ENCODE measurements at regions of chr2 and their contacts with region 1.

Region 1: DNA sequence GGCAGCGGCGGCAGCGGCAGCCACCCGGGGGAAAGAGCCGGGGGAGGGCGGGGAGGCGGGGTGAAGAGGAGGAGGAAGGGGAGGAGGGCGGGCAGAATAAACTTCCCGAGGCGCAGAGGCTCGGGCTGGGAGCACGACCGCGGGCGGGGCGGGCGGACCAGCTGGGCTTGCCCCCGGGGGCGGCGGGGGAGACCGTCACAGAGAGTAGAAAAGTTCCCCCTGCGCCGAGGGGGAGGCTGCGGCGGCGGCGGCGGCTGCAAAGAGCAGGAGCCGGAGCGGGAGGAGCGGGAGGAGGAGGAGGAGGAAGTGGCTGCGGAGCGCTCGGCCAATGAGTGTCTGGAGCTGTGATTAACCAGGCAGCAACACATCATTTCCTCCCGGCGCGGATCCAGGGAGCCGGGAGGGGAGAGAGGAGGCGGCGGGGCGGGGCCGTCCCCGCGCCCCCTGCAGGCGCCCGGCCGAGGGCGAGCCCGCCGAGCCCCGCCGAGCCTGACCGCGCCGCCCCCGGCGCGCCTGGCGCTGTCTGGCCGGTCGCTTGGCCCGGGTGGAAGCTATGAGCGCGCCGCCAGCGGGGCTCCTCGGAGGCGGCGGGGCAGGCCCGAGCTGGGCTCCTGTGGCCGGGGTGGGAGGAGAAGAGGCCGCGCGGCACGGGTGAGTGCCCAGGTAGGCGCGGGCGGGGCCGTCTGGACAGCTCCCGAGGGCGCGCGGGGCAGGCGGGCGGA is at the start of gene ACVR1:
- DNase-seq: peak; percentile 88
- ATAC-seq: peak; percentile 82
- H3K4me3 Mint-ChIP-seq: peak within 1 kb of the TSS; percentile 86
- H3K27ac Mint-ChIP-seq: peak within 1 kb of the TSS; percentile 81
- H3K4me1 Mint-ChIP-seq: peaks cover 46% of the 10 kb centered on the region
- H3K27me3 Mint-ChIP-seq: no peaks in the 10 kb centered on the region
- total RNA-seq, gene ACVR1: 10.7 to 13.6 TPM

Region 2: DNA sequence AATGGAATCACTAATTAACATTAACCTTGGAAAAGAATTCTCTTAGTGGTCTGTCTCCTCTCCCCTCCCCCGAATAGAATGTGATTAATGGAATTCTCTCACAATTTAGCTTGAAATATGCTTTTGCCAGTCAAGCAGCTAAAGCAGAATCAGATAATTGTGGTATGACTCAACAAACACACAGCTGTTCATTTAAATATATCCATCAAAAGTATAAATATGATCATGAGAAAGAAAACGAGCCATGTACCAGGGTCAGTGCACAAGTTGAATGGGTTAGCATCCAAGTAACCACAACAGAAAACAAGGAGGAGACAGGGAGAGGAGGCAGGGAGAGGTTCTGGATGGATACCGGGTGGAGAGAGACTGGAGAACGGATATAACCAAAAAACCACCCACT is 67.0 kb before region 1 on chr2:
- CTCF ChIA-PET with region 1: no interaction called
- POLR2A ChIA-PET with region 1: no interaction called
- DNase-seq: no peak
- ATAC-seq: no peak
- H3K4me3 Mint-ChIP-seq: no peak overlapping the region
- H3K27ac Mint-ChIP-seq: no peak overlapping the region
- H3K4me1 Mint-ChIP-seq: peaks cover 21% of the 10 kb centered on the region
- H3K27me3 Mint-ChIP-seq: no peaks in the 10 kb centered on the region

Region 3: DNA sequence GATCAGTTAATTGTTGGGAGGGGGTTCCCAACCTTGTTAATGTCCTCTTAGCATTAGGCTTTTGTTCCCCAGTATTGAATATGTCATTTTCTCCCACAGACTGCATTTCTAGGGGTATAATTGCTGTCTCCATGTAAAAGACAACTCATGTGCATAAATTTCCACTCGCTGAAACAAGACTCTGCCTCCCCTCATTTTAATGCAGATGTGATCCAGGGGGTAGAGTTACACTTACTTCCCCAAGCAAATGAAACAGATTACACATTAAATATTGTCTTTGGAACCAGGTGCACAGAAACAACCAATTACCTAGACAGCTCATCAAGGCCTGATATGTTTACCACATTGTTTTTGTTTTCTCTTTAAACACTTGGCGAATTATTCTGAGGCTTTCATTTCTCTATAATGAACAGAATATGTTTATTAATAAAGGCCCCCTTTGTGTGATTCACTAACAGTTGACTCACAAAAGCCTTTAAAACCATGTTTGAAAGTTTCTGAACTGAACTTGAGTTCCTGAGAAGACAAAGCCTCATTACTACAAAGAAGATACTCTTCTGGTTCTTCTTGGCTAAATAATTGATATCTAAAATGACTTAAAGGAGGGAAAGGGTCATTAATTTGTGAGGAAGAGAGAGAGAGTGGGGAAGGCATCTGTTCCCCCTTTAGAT is 14.9 kb after region 1 on chr2:
- CTCF ChIA-PET with region 1: interaction called, 73 read pairs
- POLR2A ChIA-PET with region 1: interaction called, 71 read pairs
- DNase-seq: no peak
- ATAC-seq: no peak
- H3K4me3 Mint-ChIP-seq: no peak overlapping the region
- H3K27ac Mint-ChIP-seq: peak overlapping the region; percentile 5
- H3K4me1 Mint-ChIP-seq: peaks cover 35% of the 10 kb centered on the region
- H3K27me3 Mint-ChIP-seq: no peaks in the 10 kb centered on the region

Region 4: DNA sequence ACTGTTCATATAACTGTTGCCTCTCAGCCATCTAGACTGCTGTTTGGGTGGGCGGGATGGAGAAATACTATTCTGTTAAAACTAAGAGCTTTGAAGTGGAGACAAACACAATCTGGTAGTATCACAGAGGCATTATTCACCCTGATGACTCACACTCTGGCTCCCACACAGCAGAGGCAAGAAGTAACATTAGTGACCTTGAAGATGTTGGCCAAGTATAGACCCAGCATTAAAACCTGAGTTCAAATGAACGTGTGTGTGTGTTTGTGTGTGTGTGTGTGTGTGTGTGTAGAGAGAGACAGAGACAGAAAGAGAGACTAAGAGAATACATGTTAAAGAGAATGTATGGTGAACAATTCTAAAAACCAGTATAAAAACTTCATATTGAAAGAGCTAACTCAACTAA is 22.4 kb after region 1 on chr2:
- CTCF ChIA-PET with region 1: interaction called, 73 read pairs
- POLR2A ChIA-PET with region 1: interaction called, 71 read pairs
- DNase-seq: peak; percentile 65
- ATAC-seq: peak; percentile 67
- H3K4me3 Mint-ChIP-seq: peak overlapping the region; percentile 81
- H3K27ac Mint-ChIP-seq: peak overlapping the region; percentile 98
- H3K4me1 Mint-ChIP-seq: peaks cover 74% of the 10 kb centered on the region
- H3K27me3 Mint-ChIP-seq: no peaks in the 10 kb centered on the region

Region 5: DNA sequence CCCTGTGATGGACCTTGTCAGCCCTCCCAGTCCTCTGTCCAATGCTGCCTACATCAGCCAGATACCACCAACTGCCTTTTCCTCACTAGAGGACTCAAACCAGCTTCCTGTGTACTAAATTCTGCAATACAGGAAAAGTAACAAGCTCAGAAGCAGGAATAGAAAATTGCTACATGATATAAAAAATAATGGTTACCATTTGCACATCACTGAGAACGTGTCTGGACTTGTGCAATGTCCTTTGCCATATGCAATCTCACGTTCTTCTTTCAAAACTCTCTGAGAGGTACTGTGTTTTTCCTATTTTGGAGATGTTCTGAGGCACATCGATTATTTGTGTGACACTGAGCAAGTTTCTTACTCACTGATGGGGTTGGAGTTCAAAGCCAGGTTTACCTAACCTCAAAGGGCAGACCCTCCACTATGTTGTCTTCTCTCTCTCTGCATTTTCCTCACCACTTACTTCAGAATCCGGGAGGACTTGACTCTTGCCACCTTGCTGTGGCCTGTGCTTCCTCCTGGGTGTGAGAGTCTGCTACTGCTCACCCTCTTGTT is 237.6 kb after region 1 on chr2:
- CTCF ChIA-PET with region 1: no interaction called
- POLR2A ChIA-PET with region 1: no interaction called
- DNase-seq: no peak
- ATAC-seq: no peak
- H3K4me3 Mint-ChIP-seq: no peak overlapping the region
- H3K27ac Mint-ChIP-seq: no peak overlapping the region
- H3K4me1 Mint-ChIP-seq: no peaks in the 10 kb centered on the region
- H3K27me3 Mint-ChIP-seq: peaks cover 3% of the 10 kb centered on the region

Measured in activated CD8-positive, alpha-beta T cell treated with anti-CD3 and anti-CD28 coated beads, Interleukin-2, amount 10 ng/mL, durations not matched to agents 7 days and 5 days (primary cell).